ENCODE measurements at regions of chr1 and their contacts with region 1.

Region 1: DNA sequence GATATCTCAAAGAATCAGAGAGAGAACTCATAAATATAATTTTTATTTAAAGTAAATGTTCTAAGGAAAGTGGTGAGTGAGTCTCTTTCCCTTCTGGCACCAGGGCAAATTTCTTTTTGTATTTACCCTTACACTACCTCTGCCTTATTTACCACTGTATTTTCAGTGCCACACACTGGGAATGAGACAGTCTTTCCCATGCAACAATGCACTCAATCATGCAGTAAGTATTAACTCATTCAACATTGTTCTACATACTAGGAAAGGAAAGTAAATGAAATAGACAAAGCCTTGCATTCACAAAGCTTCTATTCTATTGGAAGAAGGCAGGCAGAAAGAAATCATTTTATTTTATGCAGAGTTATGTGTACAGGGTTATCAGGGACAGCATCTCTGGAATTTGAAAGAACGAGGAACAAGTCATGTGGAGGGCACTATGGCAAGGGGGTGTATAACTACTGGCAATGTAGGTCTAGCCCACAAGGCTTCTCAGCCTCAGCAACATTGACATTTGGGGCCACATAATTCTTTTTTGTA is 129.8 kb upstream of the PRDX6 start:
- DNase-seq: no peak
- CTCF ChIP-seq: no peak

Region 2: GRCh38 chr1:173337126-173337525 is 10.2 kb before region 1 on chr1:
- CTCF ChIA-PET with region 1: interaction called, 13 read pairs
- POLR2A ChIA-PET with region 1: no interaction called
- DNase-seq: no peak
- CTCF ChIP-seq: no peak

Region 3: DNA sequence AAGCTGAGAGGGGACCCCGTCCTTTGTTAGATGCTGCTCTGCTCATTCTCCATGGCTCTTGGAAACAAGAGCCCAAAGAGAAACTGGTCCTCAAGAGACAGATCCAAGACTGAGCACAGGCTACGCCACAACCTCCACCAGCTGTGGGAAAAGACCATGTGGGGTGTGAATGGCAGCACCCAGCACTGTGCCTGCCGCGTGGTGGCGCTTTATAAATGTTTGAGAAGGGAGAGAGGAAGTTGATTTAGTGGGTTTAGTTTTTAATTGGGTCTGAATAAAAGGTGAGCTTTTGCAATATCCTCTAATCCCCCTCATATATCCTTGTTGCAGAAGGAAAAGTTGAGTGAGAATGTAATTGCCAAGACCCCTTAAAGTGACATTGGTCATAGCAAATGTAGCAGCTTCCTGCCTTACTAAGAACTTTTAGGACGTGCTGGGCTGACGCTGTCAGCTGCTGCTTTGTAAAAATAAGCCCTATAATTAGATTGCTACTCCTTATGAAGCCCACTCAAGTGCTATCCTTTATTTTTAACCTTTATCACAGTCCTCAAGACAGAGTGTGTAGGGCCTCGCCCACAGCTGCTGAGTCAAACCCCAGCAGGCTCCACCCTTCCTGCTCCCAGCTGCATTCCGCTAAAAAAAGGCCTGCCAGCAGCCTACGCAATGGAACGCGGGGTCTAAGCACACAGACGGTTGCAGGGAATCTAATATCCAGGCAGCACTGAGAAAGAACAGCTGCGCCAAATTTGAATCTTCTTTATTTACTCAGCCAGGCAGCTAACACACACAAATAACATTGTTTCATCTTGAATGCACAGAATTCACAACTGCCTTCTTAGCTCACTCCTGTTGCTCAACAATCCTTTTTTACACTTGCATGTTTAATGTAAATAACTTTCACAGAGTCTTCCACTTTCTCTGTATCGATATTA is 82.4 kb after region 1 on chr1:
- CTCF ChIA-PET with region 1: no interaction called
- POLR2A ChIA-PET with region 1: no interaction called
- DNase-seq: no peak
- CTCF ChIP-seq: peak; percentile 79

Region 4: DNA sequence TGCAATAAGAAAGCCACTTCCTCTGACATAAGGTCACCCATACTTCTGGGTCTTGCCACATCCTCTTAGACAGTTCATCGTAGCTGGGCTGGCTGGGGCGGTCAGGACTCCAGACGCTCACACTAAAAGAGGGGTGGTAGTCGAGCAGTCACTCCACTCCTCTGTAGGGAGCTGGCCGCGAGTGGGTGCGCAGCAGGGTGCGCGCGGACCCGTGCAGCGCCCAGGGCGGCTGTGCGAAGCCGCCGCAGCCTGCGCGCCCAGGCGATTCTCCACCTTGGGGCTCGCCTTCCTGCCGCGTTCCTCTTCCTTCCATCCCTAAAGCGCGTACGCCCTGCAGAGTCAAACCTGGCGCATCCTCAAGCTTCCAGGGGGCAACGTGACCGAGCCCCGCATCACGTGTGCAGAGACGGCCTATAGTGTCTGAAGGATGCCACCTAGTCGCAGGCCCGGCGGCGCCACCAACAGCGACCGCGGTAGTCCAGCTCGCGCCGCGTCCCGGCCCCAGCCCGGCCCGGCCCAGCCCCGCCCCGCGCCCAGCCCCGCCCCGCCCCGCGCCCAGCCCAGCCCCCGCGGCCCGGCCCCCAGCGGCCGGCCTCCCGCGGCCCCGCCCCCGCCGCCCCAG is 129.4 kb after region 1 on chr1:
- CTCF ChIA-PET with region 1: no interaction called
- POLR2A ChIA-PET with region 1: no interaction called
- DNase-seq: peak; percentile 95
- CTCF ChIP-seq: peak; percentile 23